Right ventricle myocardium inferior (tissue), 1 donor: ENCODE measurements at regions of chr19 and their contacts with region 1.

Region 1: DNA sequence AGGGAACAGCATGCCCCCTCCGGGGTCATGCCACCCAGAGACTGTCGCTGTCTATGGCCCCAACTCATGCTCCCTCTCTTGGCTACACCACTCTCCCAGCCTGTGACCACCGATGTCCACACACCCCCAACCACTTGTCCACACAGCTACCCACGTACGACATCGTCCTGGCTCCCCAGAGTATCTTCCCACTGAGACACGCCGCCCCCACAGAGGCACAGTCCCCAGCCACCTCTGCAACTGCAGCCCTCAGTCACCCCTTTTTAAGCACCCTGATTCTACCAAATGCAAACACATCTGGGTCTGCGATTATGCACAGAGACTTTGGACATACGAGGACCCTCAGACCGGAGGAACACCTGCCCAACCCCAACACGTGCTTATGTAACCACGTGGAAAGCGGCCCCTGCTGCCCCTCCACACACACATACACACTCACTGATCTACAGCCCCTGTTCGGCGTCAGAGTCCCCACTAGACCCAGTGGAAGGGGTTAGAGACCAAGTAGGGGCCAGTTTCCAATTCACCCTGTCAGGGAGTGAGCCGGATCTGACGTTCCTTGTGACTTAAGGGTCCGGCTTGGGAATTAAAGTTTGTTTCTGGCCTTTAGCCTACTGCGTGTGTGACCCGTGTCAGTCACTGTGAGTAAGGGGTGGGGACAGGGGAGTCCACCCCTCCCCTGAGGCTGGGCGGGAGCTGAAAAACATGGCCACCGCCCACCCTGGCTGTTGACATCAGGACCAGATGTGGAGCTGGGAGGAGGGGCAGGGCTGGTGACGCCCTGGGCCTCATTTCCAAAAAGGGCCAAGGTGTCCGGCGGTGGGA is 11.9 kb upstream of the AXL start:
- DNase-seq: peak; percentile 91
- ATAC-seq: peak; percentile 91

Region 2: GRCh38 chr19:41310033-41310758 is 103.1 kb after region 1 on chr19 and contains the start of gene CCDC97:
- intact Hi-C with region 1: loop called (anchors 1 kb)
- DNase-seq: peak; percentile 93
- ATAC-seq: peak; percentile 83
- total RNA-seq, gene CCDC97: 14.6 TPM